ENCODE measurements at regions of chr21 and their contacts with region 1.

Region 1: DNA sequence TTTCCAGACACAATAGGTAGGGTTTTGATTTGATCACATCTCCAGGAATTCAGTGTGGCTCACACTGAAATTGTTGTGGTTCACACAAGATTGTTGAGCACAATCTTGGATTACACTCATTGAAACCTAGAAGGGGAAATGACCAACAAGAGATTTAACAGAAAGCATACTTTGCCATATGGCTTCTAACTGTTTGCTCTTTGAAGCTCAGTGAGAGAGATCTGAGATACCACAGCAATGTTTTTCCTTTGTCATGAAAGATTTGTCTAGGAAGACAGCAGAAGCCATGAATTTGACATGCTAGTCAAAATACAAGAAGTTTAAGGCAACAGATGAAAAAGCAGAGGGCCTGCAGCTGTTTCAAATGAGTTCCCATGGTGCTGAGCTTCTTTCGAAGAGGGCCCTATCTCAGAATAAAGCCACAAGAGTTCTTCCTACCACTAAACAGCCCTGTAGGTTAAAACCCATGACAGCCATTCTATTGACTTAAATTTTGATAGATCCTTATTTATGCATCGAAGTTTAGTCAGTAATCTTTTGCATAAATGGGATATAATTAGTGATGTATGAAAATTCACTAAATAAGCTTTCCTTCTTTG is 650.4 kb downstream of the LTN1 start:
- DNase-seq: no peak
- ATAC-seq: no peak
- H3K4me3 ChIP-seq: no peak overlapping the region
- H3K27ac ChIP-seq: no peak overlapping the region
- H3K4me1 ChIP-seq: peaks cover 0 to 3% (median 0%) of the 10 kb centered on the region in 3 donors
- H3K27me3 ChIP-seq: no peaks in the 10 kb centered on the region
- CTCF ChIP-seq: no peak

Region 2: DNA sequence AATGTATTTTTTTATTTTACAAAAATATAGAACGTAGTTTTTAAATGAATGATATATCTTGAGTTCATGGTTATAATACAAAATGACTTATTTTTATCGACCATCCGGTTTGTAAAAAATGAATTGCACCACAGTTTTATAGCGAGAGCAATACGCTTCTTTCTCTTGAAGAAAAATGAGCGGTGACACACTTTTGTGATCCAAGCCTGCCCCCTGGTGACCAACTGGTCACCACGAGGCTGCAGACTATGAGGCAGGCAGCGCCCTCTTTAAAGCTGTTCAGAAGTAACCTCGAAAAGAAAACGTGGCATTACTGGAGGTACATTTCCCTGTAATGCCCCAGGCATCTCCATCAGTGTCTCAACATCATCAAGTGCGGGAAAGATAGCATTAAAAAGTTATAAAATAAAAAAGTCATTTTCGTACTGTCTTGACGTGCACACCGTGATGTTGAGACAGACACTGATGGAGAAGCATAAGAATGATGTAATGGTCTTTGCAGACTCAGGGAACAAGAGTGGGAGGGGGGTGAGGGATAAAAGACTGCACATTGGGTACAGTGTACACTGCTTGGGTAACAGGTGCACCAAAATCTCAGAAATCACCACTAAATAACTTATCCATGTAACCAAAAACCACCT is 641.2 kb before region 1 on chr21:
- intact Hi-C with region 1: loop called in 1 of 3 experiments (anchors 10 kb)
- DNase-seq: peak; percentile 70 to 88 (median 74)
- ATAC-seq: peak; percentile 86 to 99 (median 98)
- H3K4me3 ChIP-seq: no peak overlapping the region
- H3K27ac ChIP-seq: no peak overlapping the region
- H3K4me1 ChIP-seq: peaks cover 0 to 5% (median 0%) of the 10 kb centered on the region in 3 donors
- H3K27me3 ChIP-seq: no peaks in the 10 kb centered on the region
- CTCF ChIP-seq: peak; percentile 60 to 74 (median 67)

Region 3: GRCh38 chr21:28745131-28746016 is 403.1 kb after region 1 on chr21:
- intact Hi-C with region 1: loop called in 1 of 3 experiments (anchors 10 kb)
- DNase-seq: peak; percentile 60 to 82 (median 68)
- ATAC-seq: peak; percentile 94 to 98 (median 96)
- H3K4me3 ChIP-seq: peak overlapping the region; percentile 6 to 50 (median 23)
- H3K27ac ChIP-seq: peak overlapping the region in 1 of 4 donors; percentile 40
- H3K4me1 ChIP-seq: peaks cover 0 to 3% (median 0%) of the 10 kb centered on the region in 3 donors
- H3K27me3 ChIP-seq: no peaks in the 10 kb centered on the region
- CTCF ChIP-seq: peak; percentile 73 to 85 (median 76)